HEK293 (cell line): ENCODE measurements at regions of chr1 and their contacts with region 1.

Region 1: GRCh38 chr1:210239349-210240111 is 6.9 kb downstream of the SERTAD4 start:
- H3K4me3 ChIP-seq: no peak overlapping the region
- H3K27ac ChIP-seq: no peak overlapping the region
- H3K4me1 ChIP-seq: peaks cover 43% of the 10 kb centered on the region
- CTCF ChIP-seq: no peak; the same call in 1 of the 2 replicates

Region 2: GRCh38 chr1:210195635-210196165 is 43.8 kb before region 1 on chr1:
- CTCF ChIA-PET with region 1: no interaction called
- POLR2A ChIA-PET with region 1: no interaction called
- H3K4me3 ChIP-seq: no peak overlapping the region
- H3K27ac ChIP-seq: no peak overlapping the region
- H3K4me1 ChIP-seq: 0 out of 2 replicates have a peak, but pooled peaks cover 2% of the 10 kb centered on the region
- CTCF ChIP-seq: no peak

Region 3: GRCh38 chr1:210250998-210251679 is 11.6 kb after region 1 on chr1:
- CTCF ChIA-PET with region 1: interaction called, 14 read pairs
- POLR2A ChIA-PET with region 1: interaction called, 7 read pairs
- H3K4me3 ChIP-seq: peak overlapping the region; percentile 23
- H3K27ac ChIP-seq: peak overlapping the region; percentile 83
- H3K4me1 ChIP-seq: peaks cover 18% of the 10 kb centered on the region
- CTCF ChIP-seq: no peak

Region 4: GRCh38 chr1:210384630-210385029 is 145.1 kb after region 1 on chr1:
- CTCF ChIA-PET with region 1: no interaction called
- POLR2A ChIA-PET with region 1: no interaction called
- H3K4me3 ChIP-seq: no peak overlapping the region
- H3K27ac ChIP-seq: no peak overlapping the region
- H3K4me1 ChIP-seq: peaks cover 9% of the 10 kb centered on the region
- CTCF ChIP-seq: no peak